Activated CD4-positive, alpha-beta T cell treated with anti-CD3 and anti-CD28 coated beads for 36 hours (primary cell): ENCODE measurements at regions of chr21 and their contacts with region 1.

Region 1: GRCh38 chr21:33127154-33127893 is 57.4 kb downstream of the OLIG1 start:
- DNase-seq: peak; percentile 83
- ATAC-seq: peak; percentile 90
- H3K4me3 Mint-ChIP-seq: peak overlapping the region; percentile 52
- H3K27ac Mint-ChIP-seq: no peak overlapping the region
- H3K4me1 Mint-ChIP-seq: peaks cover 7% of the 10 kb centered on the region
- H3K27me3 Mint-ChIP-seq: peaks cover 8% of the 10 kb centered on the region

Region 2: DNA sequence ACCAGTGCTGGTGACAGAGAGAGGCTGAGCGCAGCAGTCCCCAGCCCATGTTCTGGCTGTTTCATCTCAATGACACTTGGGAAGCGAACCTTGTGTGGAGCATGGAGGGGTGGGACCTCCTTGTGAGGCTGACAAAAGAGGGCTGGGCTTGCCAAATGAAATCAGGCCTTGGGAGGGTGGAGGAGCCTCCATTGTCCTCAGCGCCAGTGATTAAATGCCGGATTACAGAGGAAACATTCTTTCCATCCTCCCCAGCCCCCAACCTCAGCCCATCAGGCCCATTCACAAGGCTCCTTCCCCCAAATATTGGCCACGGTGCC is 292.4 kb before region 1 on chr21:
- CTCF ChIA-PET with region 1: no interaction called
- POLR2A ChIA-PET with region 1: no interaction called
- intact Hi-C with region 1: loop called (anchors 5 to 10 kb)
- DNase-seq: no peak
- ATAC-seq: no peak
- H3K4me3 Mint-ChIP-seq: no peak overlapping the region
- H3K27ac Mint-ChIP-seq: no peak overlapping the region
- H3K4me1 Mint-ChIP-seq: peaks cover 2% of the 10 kb centered on the region
- H3K27me3 Mint-ChIP-seq: no peaks in the 10 kb centered on the region

Region 3: DNA sequence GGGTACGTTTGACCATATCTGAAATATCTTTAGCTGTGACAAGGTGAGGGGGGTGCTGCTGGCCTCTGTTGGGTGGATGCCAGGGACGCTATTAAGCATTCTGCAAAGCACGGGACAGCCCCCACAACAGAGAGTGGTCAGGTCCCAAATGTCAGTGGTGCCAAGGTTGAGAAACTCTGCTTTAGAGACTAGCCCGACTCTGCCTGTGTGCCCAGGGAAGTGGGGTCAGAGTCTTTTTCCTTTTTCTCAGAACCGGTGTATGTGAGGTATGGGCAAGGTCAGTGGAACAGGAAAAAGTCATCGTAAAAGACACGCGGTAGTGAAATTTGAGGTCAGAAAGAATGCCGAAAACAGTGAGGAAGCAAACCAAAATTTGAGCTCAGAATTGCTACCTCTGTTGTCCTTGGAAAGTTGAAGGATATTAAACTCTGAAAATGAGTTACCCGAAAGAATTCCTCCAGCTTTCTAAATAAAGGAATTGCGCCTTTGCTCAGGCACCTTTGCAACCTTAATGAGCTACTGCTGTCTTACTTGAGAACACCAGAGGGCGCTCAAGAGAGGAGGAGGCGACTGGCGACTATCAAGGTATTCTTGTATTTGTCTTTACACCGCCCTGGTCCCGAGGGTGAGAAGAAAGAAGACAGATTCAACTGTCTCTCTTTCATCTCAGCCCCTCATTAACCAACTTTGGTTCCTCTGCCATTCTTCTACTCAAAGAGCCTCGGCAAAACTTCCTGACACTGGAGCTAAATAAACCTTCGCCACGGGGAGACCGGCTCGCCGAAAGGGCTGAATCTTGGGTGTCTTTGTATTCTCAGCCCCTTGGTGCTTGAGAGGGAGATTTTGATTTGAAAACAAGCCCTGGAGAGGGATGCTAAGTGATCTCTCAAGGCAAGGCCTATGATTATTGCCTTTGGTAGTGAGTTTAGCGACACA is 187.0 kb before region 1 on chr21:
- CTCF ChIA-PET with region 1: interaction called, 16 read pairs
- POLR2A ChIA-PET with region 1: no interaction called
- intact Hi-C with region 1: loop called (anchors 1 to 5 kb)
- DNase-seq: peak; percentile 56
- ATAC-seq: peak; percentile 74
- H3K4me3 Mint-ChIP-seq: no peak overlapping the region
- H3K27ac Mint-ChIP-seq: no peak overlapping the region
- H3K4me1 Mint-ChIP-seq: peaks cover 4% of the 10 kb centered on the region
- H3K27me3 Mint-ChIP-seq: no peaks in the 10 kb centered on the region

Region 4: DNA sequence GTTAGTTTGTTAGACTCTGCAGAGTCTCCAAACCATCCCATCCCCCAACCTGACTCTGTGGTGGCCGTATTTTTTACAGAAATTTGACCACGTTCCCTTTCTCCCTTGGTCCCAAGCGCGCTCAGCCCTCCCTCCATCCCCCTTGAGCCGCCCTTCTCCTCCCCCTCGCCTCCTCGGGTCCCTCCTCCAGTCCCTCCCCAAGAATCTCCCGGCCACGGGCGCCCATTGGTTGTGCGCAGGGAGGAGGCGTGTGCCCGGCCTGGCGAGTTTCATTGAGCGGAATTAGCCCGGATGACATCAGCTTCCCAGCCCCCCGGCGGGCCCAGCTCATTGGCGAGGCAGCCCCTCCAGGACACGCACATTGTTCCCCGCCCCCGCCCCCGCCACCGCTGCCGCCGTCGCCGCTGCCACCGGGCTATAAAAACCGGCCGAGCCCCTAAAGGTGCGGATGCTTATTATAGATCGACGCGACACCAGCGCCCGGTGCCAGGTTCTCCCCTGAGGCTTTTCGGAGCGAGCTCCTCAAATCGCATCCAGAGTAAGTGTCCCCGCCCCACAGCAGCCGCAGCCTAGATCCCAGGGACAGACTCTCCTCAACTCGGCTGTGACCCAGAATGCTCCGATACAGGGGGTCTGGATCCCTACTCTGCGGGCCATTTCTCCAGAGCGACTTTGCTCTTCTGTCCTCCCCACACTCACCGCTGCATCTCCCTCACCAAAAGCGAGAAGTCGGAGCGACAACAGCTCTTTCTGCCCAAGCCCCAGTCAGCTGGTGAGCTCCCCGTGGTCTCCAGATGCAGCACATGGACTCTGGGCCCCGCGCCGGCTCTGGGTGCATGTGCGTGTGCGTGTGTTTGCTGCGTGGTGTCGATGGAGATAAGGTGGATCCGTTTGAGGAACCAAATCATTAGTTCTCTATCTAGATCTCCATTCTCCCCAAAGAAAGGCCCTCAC is 101.6 kb before region 1 on chr21 and contains the start of gene OLIG2:
- CTCF ChIA-PET with region 1: interaction called, 4 read pairs
- POLR2A ChIA-PET with region 1: no interaction called
- intact Hi-C with region 1: loop called (anchors 10 kb)
- DNase-seq: peak; percentile 38
- ATAC-seq: no peak
- H3K4me3 Mint-ChIP-seq: no peak within 1 kb of the TSS
- H3K27ac Mint-ChIP-seq: no peak within 1 kb of the TSS
- H3K4me1 Mint-ChIP-seq: peaks cover 40% of the 10 kb centered on the region
- H3K27me3 Mint-ChIP-seq: peaks cover 77% of the 10 kb centered on the region
- total RNA-seq, gene OLIG2: not detected

Region 5: GRCh38 chr21:33449616-33450015 is 322.3 kb after region 1 on chr21:
- CTCF ChIA-PET with region 1: no interaction called
- POLR2A ChIA-PET with region 1: no interaction called
- intact Hi-C with region 1: loop called (anchors 5 kb)
- DNase-seq: no peak
- ATAC-seq: no peak
- H3K4me3 Mint-ChIP-seq: no peak overlapping the region
- H3K27ac Mint-ChIP-seq: no peak overlapping the region
- H3K4me1 Mint-ChIP-seq: peaks cover 2% of the 10 kb centered on the region
- H3K27me3 Mint-ChIP-seq: no peaks in the 10 kb centered on the region